ENCODE measurements at regions of chr7 and their contacts with region 1.

Region 1: GRCh38 chr7:14717816-14718215 is 184.7 kb downstream of the DGKB start:
- DNase-seq: no peak
- ATAC-seq: no peak
- H3K4me3 ChIP-seq: no peak overlapping the region
- H3K27ac ChIP-seq: no peak overlapping the region
- H3K4me1 ChIP-seq: peaks cover 0 to 10% of the 10 kb centered on the region in 2 experiments; a peak in 2 of 4 replicates
- H3K27me3 ChIP-seq: no peaks in the 10 kb centered on the region
- CTCF ChIP-seq: peak; percentile 30 to 64 (median 52); a peak in 4 of 6 replicates
- POLR2A ChIP-seq: no peak
- RAD21 ChIP-seq: peak; percentile 77

Region 2: DNA sequence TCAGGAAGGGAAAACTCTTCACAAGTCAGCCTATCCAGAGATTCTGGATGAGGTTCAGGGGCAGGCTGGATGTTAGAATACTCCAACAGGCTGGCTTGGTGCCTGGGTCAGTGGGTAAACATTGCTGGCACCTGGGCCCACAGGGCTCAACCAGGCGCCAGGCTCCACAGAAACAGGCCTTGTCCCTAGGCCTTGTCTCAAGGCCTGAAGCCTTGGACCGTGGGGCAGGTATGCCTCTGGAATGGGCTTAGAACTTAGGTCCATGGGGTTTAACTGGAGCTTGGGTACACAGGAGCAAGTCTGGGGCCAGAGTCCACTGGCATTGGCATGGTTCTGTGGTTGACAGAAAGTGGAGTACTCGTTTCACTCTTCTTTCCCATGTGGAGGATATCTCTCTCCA is 465.4 kb before region 1 on chr7:
- CTCF ChIA-PET with region 1: no interaction called
- POLR2A ChIA-PET with region 1: no interaction called
- RAD21 ChIA-PET with region 1: no interaction called
- intact Hi-C with region 1: no loop called
- DNase-seq: no peak
- ATAC-seq: no peak
- H3K4me3 ChIP-seq: no peak overlapping the region
- H3K27ac ChIP-seq: no peak overlapping the region
- H3K4me1 ChIP-seq: no peaks in the 10 kb centered on the region
- H3K27me3 ChIP-seq: no peaks in the 10 kb centered on the region
- CTCF ChIP-seq: no peak
- POLR2A ChIP-seq: no peak
- RAD21 ChIP-seq: no peak

Region 3: GRCh38 chr7:14377646-14378266 is 340.1 kb before region 1 on chr7:
- CTCF ChIA-PET with region 1: no interaction called
- POLR2A ChIA-PET with region 1: no interaction called
- RAD21 ChIA-PET with region 1: no interaction called
- intact Hi-C with region 1: no loop called
- DNase-seq: no peak
- ATAC-seq: no peak
- H3K4me3 ChIP-seq: no peak overlapping the region
- H3K27ac ChIP-seq: no peak overlapping the region
- H3K4me1 ChIP-seq: no peaks in the 10 kb centered on the region
- H3K27me3 ChIP-seq: no peaks in the 10 kb centered on the region
- CTCF ChIP-seq: no peak
- POLR2A ChIP-seq: no peak
- RAD21 ChIP-seq: no peak

Region 4: GRCh38 chr7:14424675-14425074 is 293.1 kb before region 1 on chr7:
- CTCF ChIA-PET with region 1: no interaction called
- POLR2A ChIA-PET with region 1: no interaction called
- RAD21 ChIA-PET with region 1: no interaction called
- intact Hi-C with region 1: no loop called
- DNase-seq: no peak
- ATAC-seq: no peak
- H3K4me3 ChIP-seq: no peak overlapping the region
- H3K27ac ChIP-seq: no peak overlapping the region
- H3K4me1 ChIP-seq: no peaks in the 10 kb centered on the region
- H3K27me3 ChIP-seq: no peaks in the 10 kb centered on the region
- CTCF ChIP-seq: 0 out of 6 replicates have a peak, but pooled peaks of 1 of the 3 experiments have one; percentile 11
- POLR2A ChIP-seq: no peak
- RAD21 ChIP-seq: peak; percentile 22; the same call in 1 of the 2 replicates

Region 5: GRCh38 chr7:14924398-14924797 is 206.6 kb after region 1 on chr7:
- CTCF ChIA-PET with region 1: interaction called, 12 read pairs
- POLR2A ChIA-PET with region 1: no interaction called
- RAD21 ChIA-PET with region 1: interaction called in 1 of 2 experiments, 3 read pairs
- intact Hi-C with region 1: loop called (anchors 5 kb)
- DNase-seq: no peak
- ATAC-seq: no peak
- H3K4me3 ChIP-seq: no peak overlapping the region
- H3K27ac ChIP-seq: no peak overlapping the region
- H3K4me1 ChIP-seq: no peaks in the 10 kb centered on the region
- H3K27me3 ChIP-seq: no peaks in the 10 kb centered on the region
- CTCF ChIP-seq: no peak
- POLR2A ChIP-seq: no peak
- RAD21 ChIP-seq: peak; percentile 37; the same call in 1 of the 2 replicates

Region 6: GRCh38 chr7:15015545-15016326 is 297.9 kb after region 1 on chr7:
- CTCF ChIA-PET with region 1: interaction called, 39 read pairs
- POLR2A ChIA-PET with region 1: no interaction called
- RAD21 ChIA-PET with region 1: interaction called, 5 read pairs
- intact Hi-C with region 1: loop called (anchors 2 kb)
- DNase-seq: peak; percentile 87
- ATAC-seq: peak; percentile 96
- H3K4me3 ChIP-seq: peak overlapping the region; percentile 7 to 26; a peak in 2 of 4 replicates
- H3K27ac ChIP-seq: peak overlapping the region; percentile 22; the same call in 1 of the 2 replicates
- H3K4me1 ChIP-seq: peaks cover 6 to 21% of the 10 kb centered on the region in 2 experiments; a peak in 3 of 4 replicates
- H3K27me3 ChIP-seq: no peaks in the 10 kb centered on the region
- CTCF ChIP-seq: peak; percentile 54 to 72 (median 67); a peak in 5 of 6 replicates
- POLR2A ChIP-seq: no peak
- RAD21 ChIP-seq: peak; percentile 79

Region 7: GRCh38 chr7:15305002-15305600 is 587.3 kb after region 1 on chr7:
- CTCF ChIA-PET with region 1: no interaction called
- POLR2A ChIA-PET with region 1: no interaction called
- RAD21 ChIA-PET with region 1: no interaction called
- intact Hi-C with region 1: loop called (anchors 5 kb)
- DNase-seq: peak; percentile 33
- ATAC-seq: peak; percentile 73
- H3K4me3 ChIP-seq: no peak overlapping the region
- H3K27ac ChIP-seq: no peak overlapping the region
- H3K4me1 ChIP-seq: no peaks in the 10 kb centered on the region
- H3K27me3 ChIP-seq: no peaks in the 10 kb centered on the region
- CTCF ChIP-seq: peak; percentile 49 to 73 (median 63); a peak in 5 of 6 replicates
- POLR2A ChIP-seq: no peak
- RAD21 ChIP-seq: peak; percentile 73

Region 8: DNA sequence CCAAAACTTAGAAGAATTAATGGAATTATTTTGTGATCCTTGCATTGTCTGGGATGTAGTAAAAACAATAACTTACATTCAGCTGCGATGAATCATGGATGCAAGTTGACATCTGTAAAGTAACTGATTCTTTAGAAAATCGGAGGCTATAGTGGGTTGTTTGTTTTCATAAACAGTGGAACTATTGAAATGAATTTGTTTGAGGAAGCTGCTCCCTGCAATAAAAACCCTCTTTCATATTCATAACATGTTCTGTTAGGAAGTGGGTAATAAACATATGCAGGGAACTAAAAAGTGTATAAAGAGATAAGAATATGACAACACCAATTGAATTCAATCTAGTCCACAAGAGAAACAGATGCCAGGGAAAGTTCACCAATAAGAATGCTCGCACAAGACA is 790.4 kb after region 1 on chr7:
- CTCF ChIA-PET with region 1: no interaction called
- POLR2A ChIA-PET with region 1: no interaction called
- RAD21 ChIA-PET with region 1: no interaction called
- intact Hi-C with region 1: no loop called
- DNase-seq: no peak
- ATAC-seq: no peak
- H3K4me3 ChIP-seq: no peak overlapping the region
- H3K27ac ChIP-seq: no peak overlapping the region
- H3K4me1 ChIP-seq: no peaks in the 10 kb centered on the region
- H3K27me3 ChIP-seq: no peaks in the 10 kb centered on the region
- CTCF ChIP-seq: no peak
- POLR2A ChIP-seq: no peak
- RAD21 ChIP-seq: no peak

Measured in HCT116 (cell line).